Posterior vena cava (tissue), 2 donors: ENCODE measurements at regions of chr12 and their contacts with region 1.

Region 1: GRCh38 chr12:114662512-114663177 is 21.3 kb downstream of the TBX3 start:
- DNase-seq: peak; percentile 92

Region 2: DNA sequence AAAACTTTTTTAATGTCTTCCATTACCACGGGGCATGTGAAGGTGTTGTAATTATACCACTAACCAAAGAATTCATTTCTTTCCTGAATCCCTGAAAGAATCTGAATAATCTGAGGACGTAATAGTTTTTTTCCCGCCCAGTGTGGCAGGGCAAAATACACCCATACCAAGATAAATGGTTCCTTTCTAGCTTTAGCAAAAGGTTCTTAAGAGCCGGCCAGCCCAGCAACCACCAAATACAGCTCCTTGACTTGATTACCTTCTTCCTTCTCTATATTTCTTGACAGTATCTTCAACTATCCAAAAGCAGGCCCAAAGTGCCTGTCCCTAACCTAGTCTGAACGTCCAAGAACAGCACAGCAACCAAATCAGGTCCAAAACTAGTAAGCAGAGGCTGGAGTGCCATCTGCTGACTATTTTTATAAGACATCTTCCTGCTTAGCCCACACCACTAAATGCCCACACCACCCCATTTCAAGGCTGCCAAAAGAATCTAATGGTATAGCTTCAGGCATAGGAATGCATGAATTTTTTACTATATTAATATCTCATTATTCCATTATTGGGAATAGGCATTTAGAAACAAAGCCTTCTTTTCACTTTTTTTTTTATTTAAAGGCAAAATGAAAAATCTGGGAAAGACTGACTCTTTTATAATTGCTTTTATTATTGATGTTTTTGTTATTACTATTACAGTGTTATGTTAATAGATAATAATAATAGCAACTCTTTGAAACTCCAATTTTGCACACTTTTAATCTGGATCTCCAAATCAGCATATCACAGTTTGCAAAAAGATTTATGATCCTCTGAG is 1090.5 kb after region 1 on chr12:
- intact Hi-C with region 1: loop called in 1 of 2 experiments (anchors 5 kb)
- DNase-seq: no peak

Region 3: GRCh38 chr12:115916910-115917668 is 1254.4 kb after region 1 on chr12:
- intact Hi-C with region 1: loop called (anchors 5 to 10 kb)
- DNase-seq: peak; percentile 86